ENCODE measurements at regions of chr11 and their contacts with region 1.

Region 1: GRCh38 chr11:35822815-35823495 is 120.9 kb upstream of the LDLRAD3 start:
- DNase-seq: no peak
- ATAC-seq: no peak
- H3K4me3 ChIP-seq: no peak overlapping the region
- H3K27ac ChIP-seq: no peak overlapping the region
- H3K4me1 ChIP-seq: peaks cover 3 to 28% of the 10 kb centered on the region in 2 experiments; a peak in 3 of 4 replicates
- H3K27me3 ChIP-seq: no peaks in the 10 kb centered on the region
- CTCF ChIP-seq: no peak
- POLR2A ChIP-seq: no peak
- RAD21 ChIP-seq: no peak

Region 2: DNA sequence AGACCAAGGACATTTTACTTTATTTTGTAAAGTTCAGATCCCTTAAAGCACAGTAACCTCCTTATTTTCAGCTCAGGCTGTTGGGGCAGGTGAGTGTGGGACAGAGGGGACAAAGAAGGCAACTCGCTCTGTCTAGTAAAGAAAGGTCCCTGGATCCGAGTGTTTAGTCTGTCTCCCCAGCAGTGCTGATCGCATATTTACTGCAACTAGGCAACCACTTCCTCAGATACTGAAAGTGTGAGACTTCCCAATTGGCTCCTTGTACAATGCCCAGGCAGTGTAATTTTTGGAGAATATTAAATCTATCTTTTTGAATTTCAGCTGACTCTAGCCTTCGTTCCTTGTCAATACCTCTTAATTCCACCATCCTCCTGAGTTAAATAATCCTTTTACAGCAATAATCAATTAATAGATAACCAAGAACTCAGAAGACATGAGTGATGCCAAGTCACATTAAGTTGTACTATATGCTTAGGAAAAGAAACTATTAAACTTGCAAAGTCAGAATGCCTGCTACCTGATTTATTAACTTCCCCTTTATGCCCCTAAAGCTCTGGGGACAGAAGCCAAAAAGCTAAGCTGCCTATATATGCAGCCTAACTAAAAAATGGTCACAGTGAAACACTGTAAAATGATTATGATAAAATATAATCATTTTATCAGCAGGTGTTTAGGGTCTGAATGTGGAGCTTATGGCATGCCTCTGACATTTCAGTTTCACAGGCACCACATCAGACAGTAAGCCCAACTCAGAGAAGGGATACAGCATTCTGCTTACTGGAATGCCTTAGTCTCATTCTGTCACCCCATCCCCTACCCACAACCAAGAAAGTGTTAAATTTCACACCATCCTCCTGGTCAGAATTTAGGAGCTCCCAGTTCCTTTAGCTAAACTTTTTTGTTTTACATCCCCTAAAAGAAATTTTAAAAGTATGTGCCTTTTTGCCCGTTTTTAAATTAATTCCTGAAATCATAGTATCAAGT is 21.7 kb before region 1 on chr11:
- CTCF ChIA-PET with region 1: interaction called, 53 read pairs
- POLR2A ChIA-PET with region 1: no interaction called
- RAD21 ChIA-PET with region 1: no interaction called
- intact Hi-C with region 1: no loop called
- DNase-seq: no peak
- ATAC-seq: no peak
- H3K4me3 ChIP-seq: no peak overlapping the region
- H3K27ac ChIP-seq: no peak overlapping the region
- H3K4me1 ChIP-seq: peaks cover 2 to 23% of the 10 kb centered on the region in 2 experiments; a peak in 2 of 4 replicates
- H3K27me3 ChIP-seq: no peaks in the 10 kb centered on the region
- CTCF ChIP-seq: no peak
- POLR2A ChIP-seq: no peak
- RAD21 ChIP-seq: no peak

Region 3: DNA sequence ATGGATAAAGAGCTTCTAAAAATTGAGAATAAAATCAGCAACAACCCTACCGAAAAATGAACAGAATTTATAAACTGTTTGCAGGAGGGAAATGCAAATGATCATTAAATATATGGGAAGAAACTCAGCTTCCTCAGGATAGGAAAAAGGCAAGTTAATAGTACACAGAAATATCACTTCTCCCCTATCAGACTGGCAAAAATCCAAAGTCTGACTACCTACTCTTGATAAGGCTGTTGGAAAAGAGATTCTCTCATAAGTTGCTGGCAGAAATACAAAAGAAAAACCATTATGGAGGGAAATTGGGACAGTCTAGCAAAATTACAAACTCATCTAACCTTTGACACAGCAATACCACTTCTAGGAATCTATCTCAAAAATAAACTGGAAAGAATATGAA is 20.0 kb after region 1 on chr11:
- CTCF ChIA-PET with region 1: interaction called, 16 read pairs
- POLR2A ChIA-PET with region 1: no interaction called
- RAD21 ChIA-PET with region 1: no interaction called
- intact Hi-C with region 1: no loop called
- DNase-seq: no peak
- ATAC-seq: no peak
- H3K4me3 ChIP-seq: no peak overlapping the region
- H3K27ac ChIP-seq: no peak overlapping the region
- H3K4me1 ChIP-seq: no peaks in the 10 kb centered on the region
- H3K27me3 ChIP-seq: peaks cover 18% of the 10 kb centered on the region; the same call in 1 of the 2 replicates
- CTCF ChIP-seq: no peak
- POLR2A ChIP-seq: no peak
- RAD21 ChIP-seq: no peak

Region 4: DNA sequence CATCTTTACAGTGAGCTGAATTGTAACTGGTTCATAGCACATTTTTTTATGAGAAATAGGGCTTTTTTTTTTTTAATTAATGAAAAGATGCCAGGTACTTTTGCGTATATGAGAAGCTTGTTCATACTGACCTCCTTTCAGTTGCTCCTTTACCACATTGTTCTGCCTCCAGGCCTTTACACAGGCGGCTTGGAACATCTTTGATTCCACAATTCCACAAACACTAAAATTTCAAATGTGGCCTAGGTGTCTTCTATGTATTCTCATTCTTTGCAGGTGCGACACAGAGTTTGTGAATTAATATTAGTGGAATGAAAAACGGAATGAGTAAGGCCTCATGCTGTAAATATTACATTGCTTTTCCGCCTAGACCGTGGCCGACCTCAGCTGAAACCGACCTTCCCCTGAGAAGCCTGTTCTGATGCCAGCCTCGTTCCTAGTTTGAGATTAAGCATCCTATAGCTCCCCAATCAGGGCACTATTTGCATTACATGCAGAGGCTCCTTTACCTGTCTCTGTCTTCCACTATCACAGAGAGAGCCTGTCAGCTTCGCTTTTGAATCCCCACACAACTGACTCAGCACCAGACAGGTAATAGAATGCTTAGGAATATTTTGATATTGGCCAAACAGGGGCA is 246.7 kb after region 1 on chr11:
- CTCF ChIA-PET with region 1: interaction called, 17 read pairs
- POLR2A ChIA-PET with region 1: no interaction called
- RAD21 ChIA-PET with region 1: interaction called in 1 of 2 experiments, 3 read pairs
- intact Hi-C with region 1: no loop called
- DNase-seq: no peak
- ATAC-seq: peak; percentile 46; the same call in 1 of the 2 replicates
- H3K4me3 ChIP-seq: no peak overlapping the region
- H3K27ac ChIP-seq: no peak overlapping the region
- H3K4me1 ChIP-seq: no peaks in the 10 kb centered on the region
- H3K27me3 ChIP-seq: no peaks in the 10 kb centered on the region
- CTCF ChIP-seq: peak in 2 of 3 experiments; percentile 23 to 35; a peak in 3 of 6 replicates
- POLR2A ChIP-seq: no peak
- RAD21 ChIP-seq: peak; percentile 33

Region 5: GRCh38 chr11:36265793-36266628 is 443.1 kb after region 1 on chr11:
- CTCF ChIA-PET with region 1: interaction called, 57 read pairs
- POLR2A ChIA-PET with region 1: no interaction called
- RAD21 ChIA-PET with region 1: interaction called, 4 to 5 read pairs
- intact Hi-C with region 1: loop called (anchors 1 kb)
- DNase-seq: peak; percentile 19
- ATAC-seq: peak; percentile 96
- H3K4me3 ChIP-seq: no peak overlapping the region
- H3K27ac ChIP-seq: no peak overlapping the region
- H3K4me1 ChIP-seq: no peaks in the 10 kb centered on the region
- H3K27me3 ChIP-seq: no peaks in the 10 kb centered on the region
- CTCF ChIP-seq: peak; percentile 79 to 94 (median 82)
- POLR2A ChIP-seq: no peak
- RAD21 ChIP-seq: peak; percentile 94